Activated CD4-positive, alpha-beta memory T cell treated with anti-CD3 and anti-CD28 coated beads, Interleukin-2, amount 10 ng/mL, durations not matched to agents 7 days and 5 days (primary cell): ENCODE measurements at regions of chr12 and their contacts with region 1.

Region 1: DNA sequence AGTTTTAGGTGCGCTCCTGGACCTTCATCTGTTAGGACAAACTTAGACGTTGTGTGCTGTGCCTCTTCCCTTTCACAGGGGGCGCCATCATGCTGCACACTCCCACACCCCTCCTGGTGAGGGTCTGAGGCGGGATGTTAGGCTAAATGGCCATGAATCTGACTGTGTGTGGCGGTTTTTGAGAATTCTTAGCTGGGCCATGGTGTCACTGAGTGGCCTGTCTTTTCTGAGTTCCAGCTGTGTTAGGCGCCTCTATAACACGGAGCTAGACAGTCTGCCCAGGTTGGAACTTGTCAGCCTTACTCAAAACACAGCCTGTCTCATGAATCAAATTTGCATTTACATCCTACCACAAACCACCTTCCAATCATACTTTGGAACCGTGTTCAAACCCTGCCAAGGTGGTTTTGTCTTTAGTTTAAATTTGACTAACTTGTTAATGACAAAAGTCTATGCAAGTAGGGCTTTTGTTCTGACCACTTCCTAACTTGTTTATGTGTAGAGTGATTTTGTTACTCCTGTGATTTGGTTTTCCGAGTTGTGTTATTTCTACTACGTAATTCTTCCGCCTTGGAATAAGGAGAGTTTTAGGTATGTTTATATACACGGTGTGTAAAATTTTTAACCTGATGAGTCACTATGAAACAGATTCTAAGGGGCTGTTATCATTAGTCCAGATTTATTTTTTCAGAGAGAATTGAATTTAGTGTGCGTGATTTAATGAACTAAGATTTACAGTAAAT is 19.6 kb downstream of the ACVR1B start:
- DNase-seq: peak; percentile 68
- H3K4me3 Mint-ChIP-seq: peak overlapping the region; percentile 53
- H3K27ac Mint-ChIP-seq: peak overlapping the region; percentile 80
- H3K4me1 Mint-ChIP-seq: peaks cover 65% of the 10 kb centered on the region
- H3K27me3 Mint-ChIP-seq: peaks cover 36% of the 10 kb centered on the region

Region 2: GRCh38 chr12:51923501-51924271 is 47.4 kb before region 1 on chr12:
- CTCF ChIA-PET with region 1: interaction called, 10 read pairs
- POLR2A ChIA-PET with region 1: no interaction called
- DNase-seq: peak; percentile 55
- H3K4me3 Mint-ChIP-seq: peak overlapping the region; percentile 27
- H3K27ac Mint-ChIP-seq: no peak overlapping the region
- H3K4me1 Mint-ChIP-seq: peaks cover 5% of the 10 kb centered on the region
- H3K27me3 Mint-ChIP-seq: peaks cover 8% of the 10 kb centered on the region

Region 3: GRCh38 chr12:51949342-51950030 is 21.6 kb before region 1 on chr12:
- CTCF ChIA-PET with region 1: interaction called, 12 read pairs
- POLR2A ChIA-PET with region 1: interaction called, 9 read pairs
- DNase-seq: no peak
- H3K4me3 Mint-ChIP-seq: no peak overlapping the region
- H3K27ac Mint-ChIP-seq: no peak overlapping the region
- H3K4me1 Mint-ChIP-seq: peaks cover 20% of the 10 kb centered on the region
- H3K27me3 Mint-ChIP-seq: peaks cover 60% of the 10 kb centered on the region

Region 4: GRCh38 chr12:51954561-51955361 is 16.3 kb before region 1 on chr12:
- CTCF ChIA-PET with region 1: interaction called, 16 read pairs
- POLR2A ChIA-PET with region 1: interaction called, 9 read pairs
- DNase-seq: no peak
- H3K4me3 Mint-ChIP-seq: no peak overlapping the region
- H3K27ac Mint-ChIP-seq: no peak overlapping the region
- H3K4me1 Mint-ChIP-seq: peaks cover 20% of the 10 kb centered on the region
- H3K27me3 Mint-ChIP-seq: peaks cover 27% of the 10 kb centered on the region